ENCODE measurements at regions of chr2 and their contacts with region 1.

Region 1: DNA sequence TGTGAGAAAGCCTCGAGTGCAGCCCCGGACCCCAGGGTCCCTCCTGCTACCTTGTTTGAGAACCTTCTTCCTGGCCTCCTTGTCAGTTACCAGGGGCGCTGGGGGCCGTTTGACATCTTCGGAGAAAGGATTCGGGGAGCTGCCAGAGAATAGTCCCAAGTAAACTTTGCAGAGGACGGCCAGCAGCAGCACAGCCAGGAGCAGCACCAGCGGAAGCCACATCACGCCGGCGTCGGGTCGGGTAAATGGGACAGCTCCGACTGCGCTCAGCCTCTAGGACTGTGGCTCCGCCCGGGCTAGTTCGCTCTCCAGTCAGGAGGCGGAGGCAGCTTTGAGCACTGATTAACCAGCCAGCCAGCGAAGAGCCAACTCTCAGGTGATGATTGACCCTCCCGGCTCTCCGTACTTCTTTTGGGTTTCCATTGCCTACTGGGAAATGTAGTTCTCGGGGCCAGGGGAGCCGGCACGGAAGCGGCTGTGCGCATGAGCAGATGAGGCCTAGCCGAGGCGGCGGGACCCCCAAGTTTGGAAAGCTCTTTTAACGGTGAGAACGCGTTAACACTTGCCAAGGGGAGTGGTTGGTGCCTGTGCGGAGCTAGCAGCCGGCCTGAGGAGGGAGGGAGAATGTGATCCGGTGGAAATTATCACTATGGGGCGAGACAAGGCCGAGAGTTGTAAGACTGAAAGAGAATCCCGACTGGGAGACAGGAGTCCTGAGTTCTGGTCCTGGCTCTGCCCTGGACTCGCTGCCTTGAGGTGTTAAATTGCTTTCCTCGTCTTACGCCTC is at the starts of genes ELMOD3 and RETSAT:
- DNase-seq: peak; percentile 85 to 99 (median 98)
- ATAC-seq: peak; percentile 98 to 99
- H3K4me3 Mint-ChIP-seq: peak within 1 kb of the TSS; percentile 89 to 100 (median 98)
- H3K27ac Mint-ChIP-seq: peak within 1 kb of the TSS; percentile 95 to 100 (median 99)
- H3K4me1 Mint-ChIP-seq: peaks cover 22 to 68% (median 53%) of the 10 kb centered on the region in 4 donors
- H3K27me3 Mint-ChIP-seq: no peaks in the 10 kb centered on the region
- polyA plus RNA-seq, gene ELMOD3: 6.3 to 14.5 (median 11.8) TPM
- polyA plus RNA-seq, gene RETSAT: 6.6 to 15.1 (median 9.9) TPM

Region 2: GRCh38 chr2:85308896-85309555 is 45.5 kb before region 1 on chr2:
- POLR2A ChIA-PET with region 1: interaction called, 15 read pairs
- DNase-seq: peak in 1 of 10 donors; percentile 22
- ATAC-seq: peak; percentile 22 to 30
- H3K4me3 Mint-ChIP-seq: peak overlapping the region; percentile 77 to 91 (median 84)
- H3K27ac Mint-ChIP-seq: peak overlapping the region; percentile 92 to 98 (median 96)
- H3K4me1 Mint-ChIP-seq: peaks cover 24 to 65% (median 46%) of the 10 kb centered on the region in 4 donors
- H3K27me3 Mint-ChIP-seq: no peaks in the 10 kb centered on the region

Region 3: GRCh38 chr2:85318222-85319074 is 36.0 kb before region 1 on chr2:
- POLR2A ChIA-PET with region 1: interaction called, 10 read pairs
- DNase-seq: peak in 2 of 10 donors; percentile 20 to 33
- ATAC-seq: peak; percentile 74 to 79
- H3K4me3 Mint-ChIP-seq: peak overlapping the region; percentile 43 to 100 (median 72)
- H3K27ac Mint-ChIP-seq: peak overlapping the region; percentile 74 to 93 (median 84)
- H3K4me1 Mint-ChIP-seq: peaks cover 48 to 79% (median 71%) of the 10 kb centered on the region in 4 donors
- H3K27me3 Mint-ChIP-seq: no peaks in the 10 kb centered on the region

Region 4: GRCh38 chr2:85425588-85425987 is 71.1 kb after region 1 on chr2:
- POLR2A ChIA-PET with region 1: no interaction called
- DNase-seq: no peak
- ATAC-seq: no peak
- H3K4me3 Mint-ChIP-seq: no peak overlapping the region
- H3K27ac Mint-ChIP-seq: no peak overlapping the region
- H3K4me1 Mint-ChIP-seq: peaks cover 7 to 20% (median 13%) of the 10 kb centered on the region in 4 donors
- H3K27me3 Mint-ChIP-seq: no peaks in the 10 kb centered on the region

Region 5: GRCh38 chr2:85538486-85539360 is 184.2 kb after region 1 on chr2 and contains the start of gene MAT2A:
- POLR2A ChIA-PET with region 1: interaction called, 22 read pairs
- DNase-seq: peak; percentile 71 to 91 (median 86)
- ATAC-seq: peak; percentile 74 to 76
- H3K4me3 Mint-ChIP-seq: peak within 1 kb of the TSS; percentile 91 to 96 (median 95)
- H3K27ac Mint-ChIP-seq: peak within 1 kb of the TSS; percentile 90 to 98 (median 95)
- H3K4me1 Mint-ChIP-seq: peaks cover 21 to 50% (median 40%) of the 10 kb centered on the region in 4 donors
- H3K27me3 Mint-ChIP-seq: no peaks in the 10 kb centered on the region
- polyA plus RNA-seq, gene MAT2A: 68.1 to 103 (median 73.0) TPM